Activated T-helper 1 cell treated with anti-CD3 and anti-CD28 coated beads, Interleukin-12 subunit alpha, Interleukin-12 subunit beta, Interleukin-2, Interleukin-4 antibody, amounts not matched to agents 30 ng/mL and 10 ng/mL and 1 ng/mL, durations not matched to agents 14 hours and 24 hours and 36 hours (primary cell): ENCODE measurements at regions of chr3 and their contacts with region 1.

Region 1: DNA sequence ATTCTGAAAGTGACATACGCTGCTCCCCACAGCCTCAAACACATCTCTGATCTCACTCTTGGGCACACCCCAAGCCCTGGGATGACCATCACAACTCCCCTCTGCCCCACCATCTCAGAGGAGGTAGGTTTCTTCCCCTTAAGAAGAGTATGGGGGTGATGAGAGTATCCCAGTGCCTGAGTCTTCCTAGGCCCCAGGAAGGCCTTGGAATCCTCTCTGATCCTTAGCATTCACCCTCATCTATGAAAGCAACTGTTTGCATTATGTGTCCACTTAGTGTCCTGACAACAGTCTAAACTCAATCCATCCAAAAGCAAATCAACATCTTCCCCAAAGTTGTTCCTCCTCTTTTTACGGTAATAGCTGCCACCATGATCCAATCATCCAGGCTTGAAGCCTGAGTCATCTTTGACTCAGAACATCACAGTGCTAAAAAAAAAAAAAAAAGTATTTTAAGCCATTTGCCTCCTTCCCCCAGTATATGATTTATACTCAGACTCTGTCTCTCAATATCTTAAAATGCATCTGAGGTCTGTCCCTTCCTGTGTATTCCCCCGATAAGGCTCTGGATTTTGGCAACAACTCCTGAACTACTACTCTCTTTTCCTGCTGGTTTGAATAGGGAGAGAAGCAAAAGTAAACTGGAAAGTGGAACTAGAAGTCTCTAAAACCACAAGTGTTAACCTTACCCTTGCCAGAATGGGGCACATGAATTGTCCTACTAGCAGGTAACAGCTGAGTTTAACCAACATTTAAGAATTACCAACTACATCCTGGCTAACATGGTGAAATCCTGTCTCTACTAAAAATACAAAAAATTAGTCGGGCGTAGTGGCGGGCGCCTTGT is 22.5 kb downstream of the POPDC2 start:
- DNase-seq: no peak
- H3K4me3 Mint-ChIP-seq: peak overlapping the region; percentile 47
- H3K27ac Mint-ChIP-seq: peak overlapping the region; percentile 89
- H3K4me1 Mint-ChIP-seq: peaks cover 45% of the 10 kb centered on the region
- H3K27me3 Mint-ChIP-seq: peaks cover under 1% of the 10 kb centered on the region

Region 2: GRCh38 chr3:119161240-119161639 is 476.7 kb before region 1 on chr3:
- intact Hi-C with region 1: no loop called
- DNase-seq: no peak
- H3K4me3 Mint-ChIP-seq: no peak overlapping the region
- H3K27ac Mint-ChIP-seq: no peak overlapping the region
- H3K4me1 Mint-ChIP-seq: no peaks in the 10 kb centered on the region
- H3K27me3 Mint-ChIP-seq: peaks cover 4% of the 10 kb centered on the region

Region 3: GRCh38 chr3:119310071-119310470 is 327.8 kb before region 1 on chr3:
- intact Hi-C with region 1: no loop called
- DNase-seq: no peak
- H3K4me3 Mint-ChIP-seq: no peak overlapping the region
- H3K27ac Mint-ChIP-seq: no peak overlapping the region
- H3K4me1 Mint-ChIP-seq: peaks cover 18% of the 10 kb centered on the region
- H3K27me3 Mint-ChIP-seq: peaks cover 36% of the 10 kb centered on the region

Region 4: GRCh38 chr3:119395923-119396358 is 242.0 kb before region 1 on chr3:
- intact Hi-C with region 1: loop called (anchors 1 kb)
- DNase-seq: peak; percentile 2
- H3K4me3 Mint-ChIP-seq: no peak overlapping the region
- H3K27ac Mint-ChIP-seq: peak overlapping the region; percentile 63
- H3K4me1 Mint-ChIP-seq: peaks cover 36% of the 10 kb centered on the region
- H3K27me3 Mint-ChIP-seq: peaks cover 9% of the 10 kb centered on the region

Region 5: GRCh38 chr3:119463171-119464169 is 174.4 kb before region 1 on chr3 and contains the start of gene TMEM39A:
- intact Hi-C with region 1: loop called (anchors 1 kb)
- DNase-seq: peak; percentile 98
- H3K4me3 Mint-ChIP-seq: peak within 1 kb of the TSS; percentile 98
- H3K27ac Mint-ChIP-seq: peak within 1 kb of the TSS; percentile 97
- H3K4me1 Mint-ChIP-seq: peaks cover 49% of the 10 kb centered on the region
- H3K27me3 Mint-ChIP-seq: peaks cover 3% of the 10 kb centered on the region
- total RNA-seq, gene TMEM39A: 51.3 and 56.9 TPM in 2 replicates

Region 6: GRCh38 chr3:119508172-119508845 is 129.6 kb before region 1 on chr3:
- intact Hi-C with region 1: loop called (anchors 2 kb)
- DNase-seq: peak; percentile 31
- H3K4me3 Mint-ChIP-seq: peak overlapping the region; percentile 5
- H3K27ac Mint-ChIP-seq: peak overlapping the region; percentile 89
- H3K4me1 Mint-ChIP-seq: peaks cover 39% of the 10 kb centered on the region
- H3K27me3 Mint-ChIP-seq: no peaks in the 10 kb centered on the region

Region 7: DNA sequence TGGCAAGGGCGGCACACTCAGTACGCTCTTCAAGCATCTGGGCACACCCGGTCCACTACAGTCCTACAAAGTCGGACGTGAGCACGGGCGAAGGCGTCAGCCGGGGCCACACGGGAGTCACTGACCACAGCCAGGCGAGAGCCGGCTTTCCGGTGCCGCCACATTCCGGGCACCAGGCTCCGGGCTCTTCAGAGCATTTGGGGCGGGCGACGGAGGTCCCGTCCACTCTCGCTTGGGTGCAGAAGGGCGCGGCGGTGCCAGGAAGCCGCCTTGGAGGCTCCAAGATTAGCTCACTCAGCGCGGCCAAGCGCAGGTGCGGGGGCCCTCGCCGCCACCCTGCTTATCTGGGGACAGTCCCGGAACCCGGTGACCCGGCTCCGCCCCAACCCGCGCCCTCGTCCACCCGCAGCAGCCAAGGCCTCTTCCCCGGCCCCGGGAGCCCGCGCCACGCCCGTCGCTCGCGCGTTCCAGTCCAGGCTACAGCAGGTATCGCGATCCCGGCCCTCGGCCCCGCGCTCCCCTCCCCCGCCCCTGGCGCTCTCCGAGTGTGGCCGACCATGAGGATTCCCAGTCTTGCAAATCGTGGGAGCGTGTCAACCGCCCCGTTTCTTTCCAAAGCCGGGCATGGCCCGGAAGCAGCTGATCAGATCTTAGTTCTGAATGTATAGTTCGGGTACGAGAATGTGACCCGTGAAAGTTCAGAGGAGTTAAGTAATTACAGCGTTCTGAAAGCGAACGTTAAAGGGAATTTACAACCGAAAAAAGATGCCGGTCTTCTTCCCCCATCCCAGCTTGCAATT is 58.3 kb before region 1 on chr3 and contains the start of gene ADPRH:
- intact Hi-C with region 1: loop called (anchors 2 kb)
- DNase-seq: peak; percentile 47
- H3K4me3 Mint-ChIP-seq: peak within 1 kb of the TSS; percentile 90
- H3K27ac Mint-ChIP-seq: peak within 1 kb of the TSS; percentile 95
- H3K4me1 Mint-ChIP-seq: peaks cover 37% of the 10 kb centered on the region
- H3K27me3 Mint-ChIP-seq: peaks cover 6% of the 10 kb centered on the region
- total RNA-seq, gene ADPRH: 3.8 and 4.6 TPM in 2 replicates

Region 8: DNA sequence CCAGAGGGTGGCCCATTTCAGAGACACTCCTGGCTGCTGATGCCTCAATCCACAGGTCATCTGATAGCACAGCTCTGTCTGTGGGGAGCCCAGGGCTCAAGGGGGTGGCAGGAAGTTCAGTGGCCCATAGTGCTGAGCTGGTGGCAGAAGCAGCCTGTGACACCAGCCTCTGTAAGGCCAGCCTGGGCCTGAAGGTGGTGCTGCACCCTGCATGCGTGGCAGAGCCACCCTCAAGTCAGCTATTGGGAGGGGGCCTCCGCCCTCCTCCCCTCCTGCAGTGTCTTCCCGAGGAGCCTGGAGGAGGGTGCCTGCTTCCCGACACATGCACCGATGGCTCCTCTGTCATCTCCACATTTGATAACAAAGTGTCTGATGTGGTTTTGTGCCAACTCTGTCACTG is 37.2 kb before region 1 on chr3:
- intact Hi-C with region 1: loop called (anchors 2 kb)
- DNase-seq: no peak
- H3K4me3 Mint-ChIP-seq: no peak overlapping the region
- H3K27ac Mint-ChIP-seq: peak overlapping the region; percentile 61
- H3K4me1 Mint-ChIP-seq: peaks cover 41% of the 10 kb centered on the region
- H3K27me3 Mint-ChIP-seq: no peaks in the 10 kb centered on the region

Region 9: DNA sequence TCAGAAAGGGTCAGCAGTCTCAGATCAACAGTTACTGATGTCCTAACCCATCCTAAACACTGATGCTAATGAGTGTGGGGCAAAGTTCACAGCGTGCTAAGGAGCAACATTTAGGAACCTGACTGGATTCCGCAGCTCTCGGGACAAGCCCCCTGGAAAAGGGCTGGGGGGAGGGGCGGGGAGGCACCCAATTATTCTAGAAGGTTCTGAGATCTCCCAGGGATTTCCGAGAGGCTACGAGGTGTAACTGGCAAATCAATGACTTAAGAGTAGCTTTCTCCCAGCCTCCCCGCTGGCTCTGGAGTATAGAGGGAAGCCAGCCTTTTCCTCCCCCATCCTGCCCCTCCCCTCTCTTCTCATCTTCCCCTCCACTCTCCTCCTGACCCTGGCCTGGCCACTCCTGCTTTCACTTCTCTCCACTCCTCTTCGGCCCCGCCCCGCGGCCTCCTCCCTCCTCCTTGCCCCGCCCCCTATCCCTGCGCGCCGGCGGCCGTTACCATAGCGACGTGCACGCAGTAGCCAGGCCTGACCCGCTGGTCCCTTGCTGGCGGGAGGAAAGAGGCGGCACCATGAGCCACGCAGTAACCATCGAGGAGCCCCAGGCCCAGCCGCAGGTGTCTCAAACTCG is 64.7 kb after region 1 on chr3 and contains the start of gene CFAP91:
- intact Hi-C with region 1: loop called (anchors 1 kb)
- DNase-seq: peak; percentile 78
- H3K4me3 Mint-ChIP-seq: peak within 1 kb of the TSS; percentile 67
- H3K27ac Mint-ChIP-seq: no peak within 1 kb of the TSS
- H3K4me1 Mint-ChIP-seq: peaks cover 37% of the 10 kb centered on the region
- H3K27me3 Mint-ChIP-seq: peaks cover 29% of the 10 kb centered on the region
- total RNA-seq, gene CFAP91: 0.24 TPM in 1 of 2 replicates, not detected in the other

Region 10: DNA sequence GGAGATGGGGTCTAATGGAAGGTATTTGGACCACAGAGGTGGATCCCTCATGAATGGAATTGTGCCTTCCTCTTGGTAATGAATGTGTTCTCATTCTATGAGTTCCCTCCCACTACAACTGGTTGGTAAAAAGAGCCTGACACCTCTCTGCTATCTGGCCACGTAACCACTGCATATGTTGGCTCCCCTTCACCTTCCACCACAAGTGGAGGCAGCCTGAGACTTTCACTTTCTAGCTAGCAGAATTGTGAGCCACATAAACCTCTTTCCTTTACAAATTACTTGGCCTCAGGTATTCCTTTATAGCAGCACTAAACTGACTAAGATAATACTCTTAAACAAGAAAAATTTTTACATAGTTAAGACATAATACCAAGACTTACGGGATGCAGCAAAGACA is 299.3 kb after region 1 on chr3:
- intact Hi-C with region 1: no loop called
- DNase-seq: peak; percentile 22
- H3K4me3 Mint-ChIP-seq: peak overlapping the region; percentile 8
- H3K27ac Mint-ChIP-seq: peak overlapping the region; percentile 42
- H3K4me1 Mint-ChIP-seq: peaks cover 18% of the 10 kb centered on the region
- H3K27me3 Mint-ChIP-seq: peaks cover 5% of the 10 kb centered on the region

Region 11: DNA sequence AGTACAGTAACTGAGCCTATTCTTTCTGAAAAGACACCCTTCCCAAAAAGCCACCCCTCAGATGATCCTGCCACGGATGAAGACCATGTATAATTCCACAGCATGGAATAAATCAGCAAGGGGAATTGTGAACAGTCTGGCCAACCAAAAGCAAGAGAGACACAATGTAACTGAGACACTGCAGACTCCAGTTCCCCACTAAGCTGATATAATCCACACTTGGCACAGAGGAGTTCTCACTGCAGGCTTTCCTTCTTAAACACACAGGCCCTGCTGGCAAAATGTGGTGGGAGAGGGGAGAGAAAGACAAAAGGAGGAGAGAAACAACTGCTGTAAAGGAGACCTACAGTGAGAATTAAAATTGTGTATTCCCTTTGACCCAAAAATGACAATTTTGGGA is 634.4 kb after region 1 on chr3:
- intact Hi-C with region 1: no loop called
- DNase-seq: no peak
- H3K4me3 Mint-ChIP-seq: no peak overlapping the region
- H3K27ac Mint-ChIP-seq: no peak overlapping the region
- H3K4me1 Mint-ChIP-seq: no peaks in the 10 kb centered on the region
- H3K27me3 Mint-ChIP-seq: peaks cover 12% of the 10 kb centered on the region